ENCODE measurements at regions of chr17 and their contacts with region 1.

Region 1: DNA sequence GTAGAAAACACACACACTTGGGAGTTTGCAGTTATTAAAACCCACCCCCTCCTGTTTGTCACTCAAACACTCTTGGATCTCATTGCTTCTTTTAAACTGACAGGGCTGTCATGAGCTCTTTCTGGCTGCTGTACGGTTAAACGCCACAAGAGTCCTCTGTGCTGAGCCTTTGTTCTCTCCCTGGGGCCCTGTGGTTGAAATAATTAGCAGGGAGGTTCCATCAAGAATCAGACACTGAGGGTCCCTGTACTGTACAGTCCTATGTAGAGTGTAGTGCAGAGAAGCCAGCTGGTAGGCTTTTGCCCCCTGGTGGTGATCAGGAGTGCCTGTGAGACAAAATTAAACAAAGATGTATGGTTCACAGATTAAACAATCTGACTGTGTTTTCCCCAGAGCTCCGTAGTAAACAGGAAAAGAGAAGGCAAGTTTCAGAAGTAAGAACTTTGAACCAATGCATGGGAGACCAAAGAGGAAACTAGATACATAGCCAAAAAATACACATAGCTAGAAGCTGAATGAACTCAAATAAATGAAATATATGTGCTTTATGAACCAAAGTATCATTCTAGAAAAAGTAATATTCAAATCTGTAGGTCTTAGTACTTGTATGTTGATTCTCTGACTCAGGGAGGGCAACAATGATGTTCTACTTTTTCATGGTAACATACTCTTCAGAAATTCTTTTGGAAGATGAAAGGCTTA is 1.4 kb upstream of the SSH2 start:
- DNase-seq: peak; percentile 99
- H3K4me3 ChIP-seq: peak overlapping the region; percentile 80
- H3K27ac ChIP-seq: peak overlapping the region; percentile 88
- H3K4me1 ChIP-seq: peaks cover 31% of the 10 kb centered on the region
- H3K27me3 ChIP-seq: no peaks in the 10 kb centered on the region
- CTCF ChIP-seq: peak; percentile 98

Region 2: GRCh38 chr17:29591737-29592624 is 339.4 kb before region 1 on chr17:
- CTCF ChIA-PET with region 1: interaction called, 10 read pairs
- POLR2A ChIA-PET with region 1: no interaction called
- intact Hi-C with region 1: no loop called
- DNase-seq: peak; percentile 98
- H3K4me3 ChIP-seq: peak overlapping the region; percentile 97
- H3K27ac ChIP-seq: peak overlapping the region; percentile 83
- H3K4me1 ChIP-seq: peaks cover 72% of the 10 kb centered on the region
- H3K27me3 ChIP-seq: no peaks in the 10 kb centered on the region
- CTCF ChIP-seq: peak; percentile 99

Region 3: GRCh38 chr17:29640413-29640812 is 291.0 kb before region 1 on chr17:
- CTCF ChIA-PET with region 1: interaction called, 56 read pairs
- POLR2A ChIA-PET with region 1: no interaction called
- intact Hi-C with region 1: loop called (anchors 1 kb)
- DNase-seq: peak; percentile 82
- H3K4me3 ChIP-seq: no peak overlapping the region
- H3K27ac ChIP-seq: peak overlapping the region; percentile 67
- H3K4me1 ChIP-seq: peaks cover 62% of the 10 kb centered on the region
- H3K27me3 ChIP-seq: no peaks in the 10 kb centered on the region
- CTCF ChIP-seq: no peak

Region 4: DNA sequence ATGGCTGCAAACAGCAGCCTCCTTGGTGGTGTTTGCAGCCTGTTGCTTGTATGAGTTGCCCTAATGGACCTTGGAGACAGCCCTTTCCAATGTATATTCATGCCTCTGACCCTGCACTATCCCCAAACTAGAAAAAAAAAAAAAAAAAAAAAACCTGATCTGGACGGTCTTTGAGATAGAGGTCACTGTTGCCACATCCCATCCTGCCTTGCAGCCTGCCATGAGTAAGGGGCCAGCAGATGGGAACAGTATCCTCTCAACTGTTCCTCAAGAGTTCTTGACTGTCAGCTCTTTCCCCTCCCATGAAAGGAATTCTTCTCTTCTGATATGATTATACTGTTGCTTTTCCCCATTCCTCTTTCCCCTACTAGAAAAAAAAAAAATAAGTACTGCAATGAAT is 153.7 kb before region 1 on chr17:
- CTCF ChIA-PET with region 1: interaction called, 13 read pairs
- POLR2A ChIA-PET with region 1: interaction called, 4 read pairs
- intact Hi-C with region 1: no loop called
- DNase-seq: no peak
- H3K4me3 ChIP-seq: no peak overlapping the region
- H3K27ac ChIP-seq: peak overlapping the region; percentile 71
- H3K4me1 ChIP-seq: peaks cover 44% of the 10 kb centered on the region
- H3K27me3 ChIP-seq: no peaks in the 10 kb centered on the region
- CTCF ChIP-seq: no peak

Region 5: DNA sequence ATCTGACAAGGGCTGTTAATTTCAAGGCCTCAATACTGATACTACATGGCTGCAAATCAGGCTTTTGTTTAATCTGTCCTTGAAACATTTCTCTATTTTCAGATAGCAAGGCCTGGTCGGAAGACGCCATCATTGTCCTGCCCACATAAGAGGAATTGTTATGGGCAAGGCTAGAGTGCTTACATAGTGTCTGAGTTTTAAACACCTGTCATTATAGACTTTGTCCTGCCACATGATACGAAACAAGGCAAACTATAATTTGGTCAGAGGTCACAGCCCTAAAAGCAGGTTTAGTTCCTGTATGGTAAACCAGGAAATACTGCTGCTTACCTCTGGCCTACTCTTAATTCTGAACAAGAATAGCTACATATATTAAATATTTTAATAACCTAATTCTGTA is 105.8 kb before region 1 on chr17:
- CTCF ChIA-PET with region 1: interaction called, 10 read pairs
- POLR2A ChIA-PET with region 1: interaction called, 3 read pairs
- intact Hi-C with region 1: no loop called
- DNase-seq: no peak
- H3K4me3 ChIP-seq: no peak overlapping the region
- H3K27ac ChIP-seq: no peak overlapping the region
- H3K4me1 ChIP-seq: peaks cover 19% of the 10 kb centered on the region
- H3K27me3 ChIP-seq: no peaks in the 10 kb centered on the region
- CTCF ChIP-seq: no peak

Region 6: DNA sequence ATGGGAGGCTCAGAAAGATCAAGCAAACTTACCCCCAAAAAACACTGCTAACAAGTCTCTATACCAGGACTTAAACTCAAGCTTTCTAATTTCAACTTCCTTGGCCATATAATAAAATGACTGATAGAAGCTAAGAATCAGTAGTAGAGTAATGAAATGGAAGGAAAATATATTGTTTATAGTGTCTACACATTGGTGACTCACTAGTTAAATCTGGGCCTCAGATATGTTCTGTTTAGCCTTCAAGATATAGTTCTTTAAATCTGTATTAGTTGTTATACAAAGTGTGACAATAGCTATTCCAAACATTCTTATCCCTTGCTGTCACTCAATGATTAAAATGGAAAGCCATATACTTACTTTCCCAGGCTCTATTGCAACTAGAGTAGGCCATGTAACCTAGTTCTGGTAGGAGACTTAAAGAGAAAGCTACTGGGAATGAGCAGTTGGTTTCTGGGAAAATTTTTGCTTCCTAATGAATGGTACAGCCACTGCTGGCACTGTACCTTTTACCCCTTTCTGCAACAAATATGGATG is 19.7 kb before region 1 on chr17:
- CTCF ChIA-PET with region 1: no interaction called
- POLR2A ChIA-PET with region 1: no interaction called
- intact Hi-C with region 1: no loop called
- DNase-seq: no peak
- H3K4me3 ChIP-seq: no peak overlapping the region
- H3K27ac ChIP-seq: no peak overlapping the region
- H3K4me1 ChIP-seq: peaks cover 7% of the 10 kb centered on the region
- H3K27me3 ChIP-seq: no peaks in the 10 kb centered on the region
- CTCF ChIP-seq: no peak

Region 7: DNA sequence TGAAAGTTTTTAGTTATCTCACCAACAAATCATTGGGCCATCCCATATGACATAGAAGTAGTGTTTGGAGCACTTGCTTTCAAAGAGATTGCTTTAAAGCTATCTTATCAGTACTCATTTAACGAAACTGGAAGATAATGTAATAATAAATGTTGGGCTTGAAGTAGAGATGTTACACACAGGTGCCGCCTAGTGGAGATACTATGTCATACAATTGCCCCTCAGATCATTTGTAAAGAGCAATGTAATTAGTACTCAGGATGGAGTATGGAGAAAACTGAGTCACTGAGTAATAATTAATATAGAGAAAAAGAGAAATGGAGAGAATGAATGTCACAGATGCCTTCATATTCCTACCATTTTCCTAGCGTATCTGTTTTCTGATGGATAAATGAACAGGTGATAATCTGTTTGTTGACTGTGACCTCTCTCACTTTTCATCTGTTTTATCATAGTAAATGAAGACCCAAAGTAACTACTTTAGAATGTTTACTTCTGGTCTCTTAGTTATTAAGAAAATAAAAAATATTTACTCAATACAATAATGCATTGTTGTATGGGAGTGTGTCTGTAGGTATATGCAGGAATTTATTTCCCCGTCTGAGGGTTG is 90.4 kb after region 1 on chr17:
- CTCF ChIA-PET with region 1: interaction called, 9 read pairs
- POLR2A ChIA-PET with region 1: no interaction called
- intact Hi-C with region 1: loop called (anchors 5 kb)
- DNase-seq: peak; percentile 66
- H3K4me3 ChIP-seq: no peak overlapping the region
- H3K27ac ChIP-seq: no peak overlapping the region
- H3K4me1 ChIP-seq: no peaks in the 10 kb centered on the region
- H3K27me3 ChIP-seq: no peaks in the 10 kb centered on the region
- CTCF ChIP-seq: peak; percentile 90

Region 8: DNA sequence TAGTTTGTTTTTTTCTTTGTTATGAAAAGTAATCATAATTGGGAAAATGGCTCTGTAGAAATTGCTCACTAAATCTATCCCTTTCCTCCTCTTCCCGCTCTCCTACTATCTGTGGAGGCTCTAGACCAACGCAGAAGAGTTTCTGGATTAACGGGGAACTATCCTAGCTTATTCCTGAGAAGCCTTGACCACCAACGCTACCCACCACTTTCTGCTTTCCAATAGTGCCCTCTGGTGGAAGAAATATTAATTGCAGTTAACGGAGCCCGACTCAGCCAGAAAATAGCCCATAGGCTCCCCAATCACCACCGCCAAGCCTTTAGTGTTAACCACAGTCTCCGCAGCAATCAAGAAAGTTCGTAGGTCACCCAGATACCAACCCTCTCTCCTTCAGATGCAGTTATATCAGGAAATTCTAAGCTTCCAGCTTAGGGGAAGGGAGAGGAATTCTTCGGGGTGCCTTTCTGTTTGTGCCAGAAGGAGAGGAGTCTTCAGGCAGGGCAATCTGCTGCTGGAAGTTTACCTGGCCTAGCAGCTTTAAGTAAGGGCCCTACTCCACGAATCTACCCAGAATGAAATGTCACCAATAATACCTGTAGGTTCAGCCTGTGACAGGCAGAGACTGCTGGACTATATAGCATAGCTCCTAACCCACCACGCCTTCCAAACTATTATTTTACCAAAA is 162.2 kb after region 1 on chr17:
- CTCF ChIA-PET with region 1: interaction called, 20 read pairs
- POLR2A ChIA-PET with region 1: no interaction called
- intact Hi-C with region 1: loop called (anchors 2 kb)
- DNase-seq: peak; percentile 87
- H3K4me3 ChIP-seq: no peak overlapping the region
- H3K27ac ChIP-seq: peak overlapping the region; percentile 89
- H3K4me1 ChIP-seq: peaks cover 58% of the 10 kb centered on the region
- H3K27me3 ChIP-seq: no peaks in the 10 kb centered on the region
- CTCF ChIP-seq: peak; percentile 85

Measured in A673 (cell line).